ENCODE measurements at regions of chr4 and their contacts with region 1.

Region 1: GRCh38 chr4:143549928-143550327 is 36.4 kb downstream of the SMARCA5 start:
- DNase-seq: no peak
- ATAC-seq: no peak
- H3K4me3 ChIP-seq: no peak overlapping the region
- H3K27ac ChIP-seq: no peak overlapping the region
- H3K4me1 ChIP-seq: no peaks in the 10 kb centered on the region
- H3K27me3 ChIP-seq: no peaks in the 10 kb centered on the region
- CTCF ChIP-seq: no peak
- POLR2A ChIP-seq: no peak
- RAD21 ChIP-seq: no peak

Region 2: DNA sequence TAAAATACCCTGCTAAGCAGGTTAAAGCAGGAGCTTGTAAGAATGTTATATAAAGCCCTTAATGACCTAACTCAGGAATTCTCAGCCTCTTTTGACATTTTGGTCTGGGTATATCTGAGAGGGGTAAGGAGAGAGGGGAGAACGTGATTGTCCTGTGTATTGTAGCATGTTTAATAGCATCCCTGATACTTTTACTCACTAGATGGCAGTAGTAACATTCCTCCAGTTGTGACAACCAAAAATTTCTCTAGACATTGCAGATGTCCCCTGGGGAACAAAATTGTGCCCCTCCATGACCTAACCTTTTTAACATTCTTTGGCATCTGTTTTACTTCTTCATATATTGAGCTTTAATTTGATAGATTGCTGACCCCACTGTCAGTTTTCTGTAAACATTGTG is 18.5 kb before region 1 on chr4:
- CTCF ChIA-PET with region 1: no interaction called
- POLR2A ChIA-PET with region 1: no interaction called
- dilution Hi-C with region 1: no loop called
- in situ Hi-C with region 1: no loop called
- intact Hi-C with region 1: loop called (anchors 2 kb)
- DNase-seq: peak; percentile 5
- ATAC-seq: peak; percentile 69
- H3K4me3 ChIP-seq: no peak overlapping the region
- H3K27ac ChIP-seq: no peak overlapping the region
- H3K4me1 ChIP-seq: peaks cover 6% of the 10 kb centered on the region
- H3K27me3 ChIP-seq: no peaks in the 10 kb centered on the region
- CTCF ChIP-seq: 0 out of 2 replicates have a peak, but pooled peaks have one; percentile 23
- POLR2A ChIP-seq: no peak
- RAD21 ChIP-seq: no peak; the same call in 1 of the 2 replicates

Region 3: DNA sequence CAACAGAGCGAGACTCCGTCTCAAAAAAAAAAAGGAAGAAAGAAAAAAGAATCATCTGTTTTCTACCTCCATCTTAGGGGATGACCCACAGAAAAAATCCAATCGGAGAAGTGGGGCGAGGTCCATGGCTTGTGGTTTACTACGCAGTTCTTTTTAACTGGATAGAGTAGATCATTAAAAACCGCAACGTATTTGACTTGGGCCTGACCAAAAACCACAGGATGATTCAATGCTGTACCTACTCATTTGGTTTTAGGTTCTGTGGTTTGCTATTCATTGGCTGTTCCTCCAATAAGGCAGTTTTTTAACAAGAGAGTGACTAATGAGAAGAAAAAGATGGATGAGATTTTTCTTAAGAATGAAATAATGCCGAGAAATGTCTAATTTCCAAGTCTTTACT is 66.8 kb after region 1 on chr4:
- CTCF ChIA-PET with region 1: no interaction called
- POLR2A ChIA-PET with region 1: no interaction called
- dilution Hi-C with region 1: no loop called
- in situ Hi-C with region 1: no loop called
- intact Hi-C with region 1: no loop called
- DNase-seq: no peak
- ATAC-seq: no peak
- H3K4me3 ChIP-seq: no peak overlapping the region
- H3K27ac ChIP-seq: no peak overlapping the region
- H3K4me1 ChIP-seq: no peaks in the 10 kb centered on the region
- H3K27me3 ChIP-seq: no peaks in the 10 kb centered on the region
- CTCF ChIP-seq: no peak
- POLR2A ChIP-seq: no peak
- RAD21 ChIP-seq: no peak